Activated CD4-positive, alpha-beta T cell treated with anti-CD3 and anti-CD28 coated beads for 36 hours (primary cell): ENCODE measurements at regions of chr10 and their contacts with region 1.

Region 1: DNA sequence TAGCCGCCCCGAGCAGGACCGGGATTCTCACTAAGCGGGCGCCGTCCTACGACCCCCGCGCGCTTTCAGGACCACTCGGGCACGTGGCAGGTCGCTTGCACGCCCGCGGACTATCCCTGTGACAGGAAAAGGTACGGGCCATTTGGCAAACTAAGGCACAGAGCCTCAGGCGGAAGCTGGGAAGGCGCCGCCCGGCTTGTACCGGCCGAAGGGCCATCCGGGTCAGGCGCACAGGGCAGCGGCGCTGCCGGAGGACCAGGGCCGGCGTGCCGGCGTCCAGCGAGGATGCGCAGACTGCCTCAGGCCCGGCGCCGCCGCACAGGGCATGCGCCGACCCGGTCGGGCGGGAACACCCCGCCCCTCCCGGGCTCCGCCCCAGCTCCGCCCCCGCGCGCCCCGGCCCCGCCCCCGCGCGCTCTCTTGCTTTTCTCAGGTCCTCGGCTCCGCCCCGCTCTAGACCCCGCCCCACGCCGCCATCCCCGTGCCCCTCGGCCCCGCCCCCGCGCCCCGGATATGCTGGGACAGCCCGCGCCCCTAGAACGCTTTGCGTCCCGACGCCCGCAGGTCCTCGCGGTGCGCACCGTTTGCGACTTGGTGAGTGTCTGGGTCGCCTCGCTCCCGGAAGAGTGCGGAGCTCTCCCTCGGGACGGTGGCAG is at the start of gene MGMT:
- DNase-seq: peak; percentile 99
- ATAC-seq: peak; percentile 98
- H3K4me3 Mint-ChIP-seq: peak within 1 kb of the TSS; percentile 77
- H3K27ac Mint-ChIP-seq: peak within 1 kb of the TSS; percentile 42
- H3K4me1 Mint-ChIP-seq: peaks cover 7% of the 10 kb centered on the region
- H3K27me3 Mint-ChIP-seq: no peaks in the 10 kb centered on the region
- total RNA-seq, gene MGMT: 18.0 to 22.8 TPM

Region 2: DNA sequence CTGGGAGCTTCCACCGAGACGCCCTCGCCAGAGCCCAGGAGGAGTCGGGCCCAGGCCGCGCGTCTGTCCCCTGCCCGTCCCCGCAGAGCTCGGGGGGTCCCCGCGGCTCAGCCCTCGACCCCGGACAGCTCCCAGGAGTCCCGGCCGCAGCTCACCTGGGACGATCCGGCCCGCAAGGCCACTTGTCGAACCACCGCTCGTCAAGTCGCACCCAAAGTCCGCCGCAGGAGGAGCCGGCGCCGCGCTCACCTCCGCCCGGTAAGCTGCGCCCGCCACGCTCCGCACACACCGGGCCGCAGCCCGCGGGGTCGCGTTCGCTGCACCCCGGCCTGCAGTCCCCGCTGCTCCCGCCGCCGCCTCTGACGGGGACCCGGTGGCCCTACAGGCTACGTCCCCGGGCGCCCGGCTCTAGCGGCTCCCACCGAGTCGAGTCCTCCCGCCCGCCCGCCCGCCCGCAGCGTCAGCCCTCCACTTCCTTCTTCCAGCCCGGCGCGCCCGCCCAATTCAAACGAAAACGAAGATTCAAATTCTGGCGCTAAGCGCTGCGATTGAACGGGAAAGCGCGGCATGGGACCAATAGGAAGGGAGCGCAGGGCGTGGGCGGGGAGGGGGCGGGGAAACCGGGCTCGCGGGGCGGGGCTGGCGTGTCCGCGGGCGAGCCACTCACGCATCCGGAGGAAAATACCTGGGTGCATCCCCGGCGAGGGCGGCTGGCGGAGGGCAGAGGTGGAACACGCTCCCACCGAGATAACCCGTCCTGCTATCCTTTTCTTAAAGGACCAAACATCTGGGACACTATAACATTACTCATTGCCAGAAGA is 1340.7 kb before region 1 on chr10 and contains the start of gene MKI67:
- CTCF ChIA-PET with region 1: no interaction called
- POLR2A ChIA-PET with region 1: no interaction called
- intact Hi-C with region 1: loop called in 1 of 2 experiments (anchors 2 kb)
- DNase-seq: peak; percentile 96
- ATAC-seq: peak; percentile 93
- H3K4me3 Mint-ChIP-seq: peak within 1 kb of the TSS; percentile 93
- H3K27ac Mint-ChIP-seq: peak within 1 kb of the TSS; percentile 90
- H3K4me1 Mint-ChIP-seq: peaks cover 27% of the 10 kb centered on the region
- H3K27me3 Mint-ChIP-seq: peaks cover 13% of the 10 kb centered on the region
- total RNA-seq, gene MKI67: 234 to 244 TPM

Region 3: DNA sequence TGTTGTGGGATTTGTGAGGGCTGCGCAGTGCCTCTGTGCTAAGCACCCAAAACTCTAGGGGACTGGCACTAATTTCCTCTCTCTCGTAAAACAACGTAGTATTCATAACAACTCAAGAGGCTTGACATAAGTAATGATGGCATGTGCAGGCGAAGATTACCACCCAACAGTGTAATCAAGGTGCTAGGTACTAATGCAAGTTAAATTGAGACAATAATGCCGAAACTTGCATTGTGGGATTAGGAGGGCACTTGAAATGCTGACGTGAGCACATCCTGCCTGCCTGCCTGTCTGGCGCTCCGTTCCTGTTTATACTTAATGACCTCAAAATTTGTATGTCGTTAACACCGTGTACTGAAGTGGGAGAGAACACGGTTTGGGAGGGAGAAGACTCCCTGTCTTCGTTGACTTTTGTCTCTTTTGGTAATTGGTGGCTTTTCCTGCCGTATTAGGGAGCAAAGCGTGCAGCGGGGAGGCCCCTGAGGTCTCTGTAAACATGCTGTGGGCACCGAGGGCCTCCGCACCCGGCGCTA is 139.2 kb after region 1 on chr10:
- CTCF ChIA-PET with region 1: no interaction called
- POLR2A ChIA-PET with region 1: no interaction called
- intact Hi-C with region 1: no loop called
- DNase-seq: no peak
- ATAC-seq: no peak
- H3K4me3 Mint-ChIP-seq: no peak overlapping the region
- H3K27ac Mint-ChIP-seq: no peak overlapping the region
- H3K4me1 Mint-ChIP-seq: no peaks in the 10 kb centered on the region
- H3K27me3 Mint-ChIP-seq: no peaks in the 10 kb centered on the region

Region 4: DNA sequence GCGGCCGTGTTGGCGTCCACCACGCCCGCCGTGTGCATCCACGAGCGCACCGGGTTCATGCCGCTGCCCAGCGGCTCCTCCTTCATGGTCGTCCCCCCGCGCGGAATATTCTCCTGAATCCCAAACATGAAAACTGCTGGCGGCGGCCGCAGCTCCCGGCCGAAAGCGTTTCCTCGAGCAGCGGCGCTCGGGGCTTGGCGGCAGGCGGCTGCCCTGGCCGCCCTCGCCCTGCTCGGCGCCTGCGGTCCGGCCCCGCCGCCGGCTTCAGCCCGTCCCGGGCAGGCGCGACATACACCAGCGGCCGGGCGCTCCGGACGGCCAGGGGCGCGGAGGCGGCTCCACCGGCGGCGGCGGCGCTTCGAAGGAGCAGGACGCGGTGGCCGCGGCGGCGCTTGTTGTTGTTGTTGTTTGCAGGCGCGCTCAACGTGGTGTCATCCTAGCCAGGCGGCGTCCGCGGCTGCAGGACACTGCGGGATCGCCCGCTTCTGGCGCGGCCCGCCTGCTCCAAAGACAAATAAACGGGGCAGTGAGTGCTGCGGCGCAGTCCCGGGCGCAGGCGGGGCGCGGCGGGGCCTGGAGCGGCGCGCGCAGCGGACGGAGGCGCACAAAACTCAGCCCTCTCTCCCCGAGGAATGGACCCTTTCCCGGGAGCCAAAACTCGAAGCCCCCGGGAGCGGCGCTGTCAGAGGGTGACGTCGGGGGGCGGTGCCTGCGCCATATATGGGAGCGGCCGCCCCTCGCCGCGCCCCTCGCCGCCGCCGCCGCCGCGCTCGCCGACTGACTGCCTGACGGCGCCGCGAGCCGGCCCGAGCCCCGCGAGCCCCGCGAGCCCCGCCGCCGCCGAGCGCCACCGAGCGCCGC is 497.0 kb after region 1 on chr10 and contains the start of gene EBF3:
- CTCF ChIA-PET with region 1: no interaction called
- POLR2A ChIA-PET with region 1: no interaction called
- intact Hi-C with region 1: loop called in 1 of 2 experiments (anchors 5 kb)
- DNase-seq: peak; percentile 69
- ATAC-seq: peak; percentile 72
- H3K4me3 Mint-ChIP-seq: peak within 1 kb of the TSS; percentile 49
- H3K27ac Mint-ChIP-seq: no peak within 1 kb of the TSS
- H3K4me1 Mint-ChIP-seq: peaks cover 18% of the 10 kb centered on the region
- H3K27me3 Mint-ChIP-seq: peaks cover 57% of the 10 kb centered on the region
- total RNA-seq, gene EBF3: not detected

Region 5: DNA sequence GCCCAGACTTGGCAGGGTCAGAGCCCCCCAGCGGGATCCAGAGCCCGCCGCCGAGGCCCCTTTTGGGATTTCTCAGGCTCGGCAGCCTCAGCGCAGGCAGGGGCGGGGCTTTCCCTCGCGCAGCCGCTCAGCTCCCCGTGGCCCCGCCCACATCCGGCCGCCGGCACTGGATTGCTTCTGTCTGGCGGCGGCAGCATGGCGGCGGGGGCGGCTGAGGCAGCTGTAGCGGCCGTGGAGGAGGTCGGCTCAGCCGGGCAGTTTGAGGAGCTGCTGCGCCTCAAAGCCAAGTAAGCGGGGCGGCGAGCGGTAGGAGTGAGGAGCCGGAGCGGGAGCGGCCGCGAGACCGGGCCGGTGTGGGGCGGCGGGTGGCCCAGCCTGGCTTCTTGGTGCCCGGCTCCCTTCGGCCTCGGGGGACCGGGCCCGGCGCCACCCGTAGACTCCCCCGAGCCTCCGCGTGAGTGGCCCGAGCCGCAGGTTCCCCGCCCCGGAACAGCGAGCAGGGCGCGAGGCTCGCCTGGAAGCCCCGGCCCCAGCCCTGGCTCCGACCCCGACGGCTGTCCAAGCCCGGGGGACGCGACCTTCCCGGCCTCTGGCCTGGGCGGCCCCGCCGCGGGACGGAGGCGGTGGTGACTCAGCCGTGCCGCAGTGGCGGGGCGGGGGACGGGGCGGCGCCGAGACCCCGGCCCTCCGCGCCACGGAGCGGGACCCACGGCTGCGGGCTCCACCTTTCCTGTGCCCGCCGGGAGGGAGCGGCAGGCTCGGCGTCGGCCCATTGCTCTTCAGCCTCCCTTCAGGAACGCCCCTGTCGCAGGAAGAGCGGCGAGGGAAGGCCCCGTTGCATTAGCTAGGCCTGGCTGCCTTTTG is 669.6 kb after region 1 on chr10 and contains the start of gene GLRX3:
- CTCF ChIA-PET with region 1: interaction called, 3 read pairs
- POLR2A ChIA-PET with region 1: no interaction called
- intact Hi-C with region 1: loop called (anchors 1 to 5 kb)
- DNase-seq: peak; percentile 95
- ATAC-seq: peak; percentile 82
- H3K4me3 Mint-ChIP-seq: peak within 1 kb of the TSS; percentile 84
- H3K27ac Mint-ChIP-seq: peak within 1 kb of the TSS; percentile 82
- H3K4me1 Mint-ChIP-seq: peaks cover 41% of the 10 kb centered on the region
- H3K27me3 Mint-ChIP-seq: peaks cover 2% of the 10 kb centered on the region
- total RNA-seq, gene GLRX3: 117 to 123 TPM

Region 6: DNA sequence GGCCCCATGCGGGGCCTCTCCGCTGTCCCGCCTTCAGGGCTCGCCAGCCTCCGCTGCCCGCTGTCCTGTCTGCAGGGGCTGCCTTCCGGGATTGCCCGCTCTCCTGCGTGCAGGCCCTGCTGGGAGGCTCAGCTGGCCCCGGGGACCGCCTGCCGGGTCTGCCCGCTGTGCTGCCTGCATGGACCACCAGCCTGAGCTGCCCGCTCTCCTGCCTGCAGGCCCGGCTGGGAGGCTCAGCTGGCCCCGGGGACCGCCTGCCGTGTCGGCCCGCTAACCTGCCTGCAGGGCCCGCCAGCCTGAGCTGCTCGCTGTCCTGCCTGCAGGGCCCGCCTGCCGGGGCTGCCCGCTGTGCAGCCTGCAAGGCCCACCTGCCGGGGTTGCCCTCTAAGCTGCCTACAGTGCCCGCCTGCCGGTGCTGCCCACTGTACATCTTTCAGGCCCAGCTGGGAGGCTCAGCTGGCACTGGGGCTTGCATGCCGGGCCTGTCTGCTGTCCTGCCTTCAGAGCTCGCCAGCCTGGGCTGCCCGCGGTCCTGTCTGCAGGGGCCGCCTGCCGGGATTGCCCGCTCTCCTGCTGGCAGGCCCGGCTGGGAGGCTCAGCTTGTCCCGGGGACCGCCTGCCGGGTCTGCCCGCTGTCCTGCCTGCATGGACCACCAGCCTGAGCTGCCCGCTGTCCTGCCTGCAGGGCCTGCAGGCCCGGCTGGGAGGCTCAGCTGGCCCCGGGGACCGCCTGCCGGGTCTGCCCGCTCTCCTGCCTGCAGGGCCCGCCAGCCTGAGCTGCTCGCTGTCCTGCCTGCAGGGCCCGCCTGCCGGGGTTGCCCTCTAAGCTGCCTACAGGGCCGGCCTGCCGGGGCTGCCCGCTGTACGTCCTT is 834.4 kb after region 1 on chr10:
- CTCF ChIA-PET with region 1: no interaction called
- POLR2A ChIA-PET with region 1: no interaction called
- intact Hi-C with region 1: loop called in 1 of 2 experiments (anchors 1 kb)
- DNase-seq: peak; percentile 89
- ATAC-seq: peak; percentile 68
- H3K4me3 Mint-ChIP-seq: peak overlapping the region; percentile 80
- H3K27ac Mint-ChIP-seq: peak overlapping the region; percentile 75
- H3K4me1 Mint-ChIP-seq: peaks cover 12% of the 10 kb centered on the region
- H3K27me3 Mint-ChIP-seq: no peaks in the 10 kb centered on the region